GM12878 (cell line): ENCODE measurements at regions of chr6 and their contacts with region 1.

Region 1: GRCh38 chr6:132728616-132729015 is 14.8 kb upstream of the VNN1 start:
- DNase-seq: no peak
- ATAC-seq: peak; percentile 51; the same call in 2 of the 3 replicates
- H3K4me3 ChIP-seq: no peak overlapping the region
- H3K27ac ChIP-seq: no peak overlapping the region
- H3K4me1 ChIP-seq: peaks cover 7% of the 10 kb centered on the region; the same call in 1 of the 2 replicates
- H3K27me3 ChIP-seq: no peaks in the 10 kb centered on the region
- CTCF ChIP-seq: no peak
- EP300 ChIP-seq: no peak
- POLR2A ChIP-seq: no peak
- RAD21 ChIP-seq: no peak

Region 2: GRCh38 chr6:132490024-132490423 is 238.6 kb before region 1 on chr6:
- CTCF ChIA-PET with region 1: no interaction called
- POLR2A ChIA-PET with region 1: no interaction called
- RAD21 ChIA-PET with region 1: no interaction called
- SMC1A ChIA-PET with region 1: no interaction called
- in situ Hi-C with region 1: no loop called
- intact Hi-C with region 1: no loop called
- DNase-seq: no peak
- ATAC-seq: peak; percentile 54
- H3K4me3 ChIP-seq: peak overlapping the region; percentile 56
- H3K27ac ChIP-seq: peak overlapping the region; percentile 73
- H3K4me1 ChIP-seq: peaks cover 38% of the 10 kb centered on the region
- H3K27me3 ChIP-seq: no peaks in the 10 kb centered on the region
- CTCF ChIP-seq: no peak
- EP300 ChIP-seq: no peak
- POLR2A ChIP-seq: no peak
- RAD21 ChIP-seq: no peak

Region 3: DNA sequence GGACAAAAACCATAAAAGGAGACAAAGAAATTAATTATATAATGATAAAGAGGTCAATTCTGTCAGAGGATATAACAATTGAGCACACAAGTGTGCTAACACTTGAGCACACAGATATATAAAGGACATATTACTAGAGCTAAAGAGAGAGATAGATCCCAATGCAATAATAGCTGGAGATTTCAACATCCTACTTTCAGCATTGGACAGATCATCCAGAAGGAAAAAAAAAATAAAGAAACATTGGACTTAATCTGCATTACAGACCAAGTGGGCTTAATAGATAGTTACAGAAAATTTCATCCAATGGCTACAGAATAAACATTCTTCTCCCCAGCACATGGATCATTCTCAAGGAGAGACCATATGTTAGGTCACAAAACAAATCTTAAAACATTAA is 24.7 kb before region 1 on chr6:
- CTCF ChIA-PET with region 1: no interaction called
- POLR2A ChIA-PET with region 1: no interaction called
- RAD21 ChIA-PET with region 1: no interaction called
- SMC1A ChIA-PET with region 1: no interaction called
- in situ Hi-C with region 1: no loop called
- intact Hi-C with region 1: no loop called
- DNase-seq: no peak
- ATAC-seq: no peak
- H3K4me3 ChIP-seq: no peak overlapping the region
- H3K27ac ChIP-seq: no peak overlapping the region
- H3K4me1 ChIP-seq: no peaks in the 10 kb centered on the region
- H3K27me3 ChIP-seq: no peaks in the 10 kb centered on the region; a peak in 3 of 4 replicates
- CTCF ChIP-seq: no peak
- EP300 ChIP-seq: no peak
- POLR2A ChIP-seq: no peak
- RAD21 ChIP-seq: no peak

Region 4: DNA sequence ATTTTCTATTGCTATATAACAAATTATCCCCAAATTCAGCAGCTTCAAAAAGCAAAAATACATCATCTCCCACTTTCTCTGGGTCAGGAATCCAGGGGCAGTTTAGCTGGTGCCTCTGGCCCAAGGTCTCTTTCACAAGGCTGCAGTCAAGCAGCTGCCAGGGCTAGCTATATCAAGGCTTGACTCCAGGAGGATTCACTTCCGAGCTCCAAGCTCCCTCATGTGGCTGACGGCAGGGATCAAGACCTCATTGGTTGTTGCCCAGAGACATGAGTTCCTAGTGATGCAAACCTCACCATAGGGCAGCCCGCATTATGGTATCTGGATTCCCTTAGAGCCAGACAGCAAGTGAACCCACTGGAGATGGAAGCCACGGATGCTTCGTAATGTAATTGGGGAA is 13.4 kb before region 1 on chr6:
- CTCF ChIA-PET with region 1: interaction called, 5 read pairs
- POLR2A ChIA-PET with region 1: interaction called, 7 read pairs
- RAD21 ChIA-PET with region 1: no interaction called
- SMC1A ChIA-PET with region 1: interaction called, 13 read pairs
- in situ Hi-C with region 1: no loop called
- intact Hi-C with region 1: no loop called
- DNase-seq: no peak
- ATAC-seq: no peak
- H3K4me3 ChIP-seq: no peak overlapping the region
- H3K27ac ChIP-seq: no peak overlapping the region
- H3K4me1 ChIP-seq: no peaks in the 10 kb centered on the region
- H3K27me3 ChIP-seq: 0 out of 4 replicates have a peak, but pooled peaks cover 2% of the 10 kb centered on the region in 2 experiments
- CTCF ChIP-seq: no peak
- EP300 ChIP-seq: no peak
- POLR2A ChIP-seq: no peak
- RAD21 ChIP-seq: 0 out of 2 replicates have a peak, but pooled peaks have one; percentile 9

Region 5: DNA sequence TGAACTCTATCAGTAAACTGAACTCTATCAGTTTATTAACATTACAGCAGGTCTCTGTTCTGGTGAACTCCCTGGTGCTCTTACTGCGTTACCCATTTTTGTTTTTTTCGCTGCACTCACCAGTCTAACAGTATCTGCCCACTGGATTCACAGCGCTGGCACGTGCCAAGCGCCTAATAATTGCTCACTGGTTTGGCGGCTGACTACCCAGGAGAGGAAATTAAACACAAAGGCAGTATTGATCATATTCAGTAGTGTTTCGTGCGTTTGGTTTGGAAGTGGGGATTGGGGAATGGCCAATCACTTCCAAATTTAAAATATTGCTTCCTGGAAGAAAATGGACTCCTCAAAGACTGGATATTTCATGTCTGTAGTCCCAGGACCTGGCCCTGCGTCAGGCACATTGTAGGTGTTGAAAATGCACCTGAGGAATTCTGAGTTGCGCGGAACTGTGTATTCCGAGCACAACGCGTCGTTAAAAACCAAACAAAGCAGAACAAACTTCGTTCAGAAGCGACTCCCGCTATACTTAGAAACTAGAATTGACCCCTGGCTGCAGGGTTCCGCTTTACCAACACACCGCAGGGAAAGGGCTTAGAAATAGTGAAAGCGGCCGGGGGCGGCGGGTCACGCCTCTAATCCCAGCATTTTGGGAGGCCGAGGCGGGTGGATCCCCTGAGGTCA is 84.7 kb after region 1 on chr6:
- CTCF ChIA-PET with region 1: no interaction called
- POLR2A ChIA-PET with region 1: no interaction called
- RAD21 ChIA-PET with region 1: no interaction called
- SMC1A ChIA-PET with region 1: no interaction called
- in situ Hi-C with region 1: no loop called
- intact Hi-C with region 1: no loop called
- DNase-seq: no peak
- ATAC-seq: peak; percentile 52
- H3K4me3 ChIP-seq: peak overlapping the region; percentile 85
- H3K27ac ChIP-seq: peak overlapping the region; percentile 96
- H3K4me1 ChIP-seq: peaks cover 6% of the 10 kb centered on the region; the same call in 1 of the 2 replicates
- H3K27me3 ChIP-seq: peaks cover 0 to 5% of the 10 kb centered on the region in 2 experiments; a peak in 1 of 4 replicates
- CTCF ChIP-seq: no peak
- EP300 ChIP-seq: no peak
- POLR2A ChIP-seq: peak; percentile 23; the same call in 1 of the 2 replicates
- RAD21 ChIP-seq: no peak